ENCODE measurements at regions of chr10 and their contacts with region 1.

Region 1: GRCh38 chr10:5960070-5960972 is 17.0 kb downstream of the IL15RA start:
- DNase-seq: peak; percentile 46 to 68 (median 58)
- ATAC-seq: peak; percentile 81
- H3K4me3 ChIP-seq: no peak overlapping the region
- H3K27ac ChIP-seq: peak overlapping the region; percentile 26; the same call in 2 of the 3 replicates
- H3K4me1 ChIP-seq: peaks cover 6 to 24% of the 10 kb centered on the region in 2 experiments; a peak in 4 of 5 replicates
- H3K27me3 ChIP-seq: no peaks in the 10 kb centered on the region
- CTCF ChIP-seq: no peak
- EP300 ChIP-seq: no peak
- POLR2A ChIP-seq: no peak
- RAD21 ChIP-seq: no peak

Region 2: DNA sequence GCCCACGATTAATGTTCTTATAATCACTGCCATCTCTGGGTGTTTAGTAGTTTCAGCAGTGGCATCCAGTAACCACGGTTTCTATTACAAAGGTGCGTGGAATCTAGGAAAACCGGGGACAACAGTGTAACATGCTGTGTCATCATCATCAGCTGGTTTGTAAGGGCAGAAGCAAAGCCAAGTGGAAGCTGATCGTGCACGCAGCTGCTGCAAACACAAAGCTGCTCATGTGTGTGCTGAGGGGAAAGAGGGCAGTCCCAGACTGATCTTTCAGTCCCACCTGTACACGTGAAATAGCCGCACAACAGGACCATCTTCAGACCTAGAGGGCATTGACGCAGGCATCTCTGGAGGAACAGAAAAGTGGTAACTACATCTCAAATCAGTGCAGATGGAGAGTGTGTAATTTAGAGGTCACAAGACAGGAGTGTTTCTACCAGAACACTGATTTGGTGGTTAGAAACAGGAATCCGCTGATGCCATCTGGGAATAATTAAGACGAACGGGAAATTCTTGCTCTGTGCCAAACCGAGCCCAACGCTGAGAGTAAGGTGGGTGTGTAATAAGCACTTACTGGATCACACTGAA is 84.0 kb before region 1 on chr10:
- CTCF ChIA-PET with region 1: no interaction called
- POLR2A ChIA-PET with region 1: no interaction called
- in situ Hi-C with region 1: no loop called
- intact Hi-C with region 1: no loop called
- DNase-seq: no peak
- ATAC-seq: no peak
- H3K4me3 ChIP-seq: no peak overlapping the region
- H3K27ac ChIP-seq: no peak overlapping the region
- H3K4me1 ChIP-seq: no peaks in the 10 kb centered on the region; a peak in 1 of 5 replicates
- H3K27me3 ChIP-seq: no peaks in the 10 kb centered on the region
- CTCF ChIP-seq: no peak
- EP300 ChIP-seq: no peak
- POLR2A ChIP-seq: no peak
- RAD21 ChIP-seq: no peak

Region 3: DNA sequence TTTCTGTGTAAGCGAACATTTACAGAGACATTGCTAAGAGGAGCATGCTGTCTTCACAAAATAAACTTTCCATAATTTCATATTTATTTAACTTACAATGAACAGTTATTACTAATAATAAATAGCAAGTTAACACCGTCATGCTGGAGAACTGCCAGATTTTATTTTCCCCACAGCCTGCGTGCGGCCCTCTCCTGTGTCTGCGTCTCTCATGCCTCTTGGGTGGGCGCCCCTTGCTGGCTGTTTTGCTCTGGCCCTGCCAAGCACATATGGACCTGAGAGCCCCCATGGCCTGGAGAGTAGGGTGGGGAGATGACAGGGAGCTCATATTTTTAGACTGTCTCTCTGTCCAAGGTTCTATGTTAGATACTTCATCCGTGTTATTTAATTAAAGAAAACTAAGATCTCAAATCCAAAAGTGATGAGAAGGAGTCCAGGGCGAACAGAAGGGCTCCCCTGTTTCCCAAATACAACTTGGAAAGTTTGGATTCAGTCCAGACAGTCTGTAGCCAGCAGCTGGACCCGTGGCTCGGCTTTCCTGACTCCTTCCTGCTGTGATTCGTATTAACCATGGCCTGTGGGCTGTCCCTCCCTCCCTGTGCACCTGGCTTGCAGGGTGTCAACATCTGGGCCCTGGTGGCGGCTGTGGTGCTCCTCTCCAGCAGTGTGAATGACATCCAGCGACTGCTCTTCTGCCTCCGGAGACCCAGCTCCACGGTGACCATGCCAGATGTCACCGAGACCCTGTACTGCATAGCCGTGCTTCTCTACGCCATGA is 49.8 kb before region 1 on chr10:
- CTCF ChIA-PET with region 1: no interaction called
- POLR2A ChIA-PET with region 1: no interaction called
- in situ Hi-C with region 1: no loop called
- intact Hi-C with region 1: no loop called
- DNase-seq: no peak
- ATAC-seq: no peak
- H3K4me3 ChIP-seq: no peak overlapping the region
- H3K27ac ChIP-seq: no peak overlapping the region
- H3K4me1 ChIP-seq: peaks cover 0 to 3% of the 10 kb centered on the region in 2 experiments; a peak in 1 of 5 replicates
- H3K27me3 ChIP-seq: no peaks in the 10 kb centered on the region
- CTCF ChIP-seq: no peak
- EP300 ChIP-seq: no peak
- POLR2A ChIP-seq: no peak
- RAD21 ChIP-seq: no peak

Region 4: GRCh38 chr10:5971315-5971832 is 11.1 kb after region 1 on chr10:
- CTCF ChIA-PET with region 1: no interaction called
- POLR2A ChIA-PET with region 1: interaction called, 16 read pairs
- in situ Hi-C with region 1: no loop called
- intact Hi-C with region 1: no loop called
- DNase-seq: peak; percentile 68 to 81 (median 75)
- ATAC-seq: peak; percentile 80
- H3K4me3 ChIP-seq: no peak overlapping the region
- H3K27ac ChIP-seq: peak overlapping the region; percentile 71
- H3K4me1 ChIP-seq: peaks cover 19 to 30% of the 10 kb centered on the region in 2 experiments
- H3K27me3 ChIP-seq: no peaks in the 10 kb centered on the region
- CTCF ChIP-seq: no peak
- EP300 ChIP-seq: peak; percentile 47; the same call in 1 of the 2 replicates
- POLR2A ChIP-seq: no peak
- RAD21 ChIP-seq: no peak

Region 5: DNA sequence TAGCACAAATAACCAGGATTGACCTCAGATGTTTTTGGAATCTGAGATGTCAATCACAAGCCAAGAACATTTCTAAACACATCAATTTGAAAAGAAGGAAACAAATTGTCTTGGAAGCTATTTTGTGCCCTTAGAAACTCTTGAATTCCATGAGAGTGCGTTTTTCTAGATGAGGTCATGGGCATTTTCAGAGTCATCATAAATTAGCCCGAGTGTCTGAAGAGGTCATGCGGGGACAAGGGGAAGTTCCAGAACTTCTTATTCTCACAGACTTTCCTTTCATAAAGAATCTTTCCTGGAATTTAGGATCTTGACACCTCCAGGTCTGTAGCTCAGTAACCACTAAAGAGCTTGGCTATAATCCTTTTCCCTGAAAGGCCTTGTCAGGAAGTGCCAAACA is 73.6 kb after region 1 on chr10:
- CTCF ChIA-PET with region 1: no interaction called
- POLR2A ChIA-PET with region 1: no interaction called
- in situ Hi-C with region 1: no loop called
- intact Hi-C with region 1: no loop called
- DNase-seq: peak in 1 of 4 experiments; percentile 21
- ATAC-seq: peak; percentile 59; the same call in 2 of the 3 replicates
- H3K4me3 ChIP-seq: no peak overlapping the region
- H3K27ac ChIP-seq: peak overlapping the region; percentile 36; the same call in 1 of the 3 replicates
- H3K4me1 ChIP-seq: peaks cover 5 to 6% of the 10 kb centered on the region in 2 experiments; a peak in 3 of 5 replicates
- H3K27me3 ChIP-seq: peaks cover 3 to 12% of the 10 kb centered on the region in 2 experiments; a peak in 3 of 5 replicates
- CTCF ChIP-seq: no peak
- EP300 ChIP-seq: peak; percentile 65
- POLR2A ChIP-seq: no peak
- RAD21 ChIP-seq: no peak

Region 6: GRCh38 chr10:6144406-6145165 is 184.3 kb after region 1 on chr10:
- CTCF ChIA-PET with region 1: no interaction called
- POLR2A ChIA-PET with region 1: no interaction called
- in situ Hi-C with region 1: no loop called
- intact Hi-C with region 1: no loop called
- DNase-seq: peak; percentile 85 to 93 (median 88)
- ATAC-seq: peak; percentile 93
- H3K4me3 ChIP-seq: peak overlapping the region; percentile 72
- H3K27ac ChIP-seq: peak overlapping the region; percentile 81
- H3K4me1 ChIP-seq: peaks cover 26 to 58% of the 10 kb centered on the region in 2 experiments
- H3K27me3 ChIP-seq: peaks cover 15 to 23% of the 10 kb centered on the region in 2 experiments
- CTCF ChIP-seq: peak in 1 of 3 experiments; percentile 10; a peak in 1 of 6 replicates
- EP300 ChIP-seq: no peak
- POLR2A ChIP-seq: peak; percentile 71
- RAD21 ChIP-seq: no peak

Measured in K562 (cell line).